Caco-2 (cell line): ENCODE measurements at regions of chr14 and their contacts with region 1.

Region 1: GRCh38 chr14:61537563-61538463 is 157.5 kb upstream of the HIF1A start:
- DNase-seq: peak; percentile 90 to 93
- H3K4me3 ChIP-seq: no peak overlapping the region
- H3K4me3 Mint-ChIP-seq: peak overlapping the region; percentile 63
- H3K27ac Mint-ChIP-seq: peak overlapping the region; percentile 99
- H3K4me1 ChIP-seq: peaks cover 45% of the 10 kb centered on the region
- H3K4me1 Mint-ChIP-seq: peaks cover 42% of the 10 kb centered on the region
- H3K27me3 ChIP-seq: no peaks in the 10 kb centered on the region
- H3K27me3 Mint-ChIP-seq: no peaks in the 10 kb centered on the region
- CTCF ChIP-seq: no peak

Region 2: DNA sequence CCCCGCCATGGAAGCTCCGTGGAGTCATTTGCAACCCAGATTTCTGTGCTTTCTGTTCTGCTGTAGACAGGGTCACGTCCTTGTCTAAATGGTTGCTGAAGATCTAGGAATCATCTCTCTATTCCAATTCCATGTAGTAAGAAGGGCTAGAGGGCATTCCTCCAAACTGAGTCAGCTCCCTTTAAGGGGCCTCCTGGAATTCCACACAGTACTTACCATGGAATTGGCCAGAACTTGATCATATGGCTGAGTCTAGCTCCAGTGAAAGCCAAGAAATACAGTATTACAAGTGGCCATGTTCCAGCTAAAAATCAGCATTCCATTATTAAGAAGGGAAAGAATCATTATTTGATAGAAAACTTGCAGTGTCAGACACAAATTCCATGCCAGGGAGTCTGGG is 44.6 kb before region 1 on chr14:
- CTCF ChIA-PET with region 1: no interaction called
- POLR2A ChIA-PET with region 1: no interaction called
- intact Hi-C with region 1: loop called (anchors 2 kb)
- DNase-seq: peak in 1 of 2 experiments; percentile 12
- H3K4me3 ChIP-seq: no peak overlapping the region
- H3K4me3 Mint-ChIP-seq: no peak overlapping the region
- H3K27ac Mint-ChIP-seq: no peak overlapping the region
- H3K4me1 ChIP-seq: peaks cover 47% of the 10 kb centered on the region
- H3K4me1 Mint-ChIP-seq: peaks cover 6% of the 10 kb centered on the region
- H3K27me3 ChIP-seq: no peaks in the 10 kb centered on the region
- H3K27me3 Mint-ChIP-seq: no peaks in the 10 kb centered on the region
- CTCF ChIP-seq: no peak

Region 3: DNA sequence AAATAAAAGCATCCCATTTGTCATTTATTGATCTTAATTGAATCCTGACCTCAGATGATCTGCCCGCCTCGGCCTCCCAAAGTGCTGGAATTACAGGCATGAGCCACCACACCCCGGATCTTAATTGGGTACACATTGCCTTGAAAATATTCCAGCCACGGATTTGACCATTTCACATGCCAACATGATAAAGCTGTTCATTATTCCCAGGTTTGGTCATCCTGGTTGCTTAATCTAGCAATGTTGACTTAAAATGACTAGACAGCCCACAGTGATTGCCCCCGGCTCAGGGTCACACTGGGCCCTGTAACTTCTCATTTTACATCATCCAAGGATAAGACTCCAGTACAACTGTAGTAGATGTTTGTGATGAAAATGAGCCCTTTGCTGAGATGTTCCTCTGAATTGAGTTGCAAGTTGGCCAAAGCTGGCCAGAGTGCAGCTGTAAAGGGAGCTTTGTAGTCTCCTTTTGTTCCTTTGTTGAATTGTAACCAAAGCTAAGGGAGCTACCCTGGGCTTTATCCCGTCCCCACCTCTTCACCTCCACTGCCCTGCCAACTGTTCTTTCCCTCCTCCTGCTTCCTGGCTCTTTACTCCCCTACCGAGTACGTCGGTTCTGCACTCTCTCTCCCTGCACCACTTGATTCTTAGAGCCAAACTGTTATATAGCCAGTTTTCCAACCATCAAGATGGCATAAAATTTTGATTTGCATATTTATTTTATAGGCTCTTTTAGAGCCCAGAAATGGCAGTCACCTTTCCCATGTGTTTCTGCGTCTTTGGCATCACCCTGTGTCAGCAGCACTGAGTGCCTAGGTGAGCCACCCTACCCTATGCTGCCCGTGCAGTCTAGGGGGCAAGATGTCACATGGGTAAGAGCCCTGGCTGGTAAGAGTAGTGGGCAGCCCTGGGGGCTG is 16.2 kb after region 1 on chr14:
- CTCF ChIA-PET with region 1: interaction called, 18 read pairs
- POLR2A ChIA-PET with region 1: interaction called, 30 read pairs
- intact Hi-C with region 1: loop called (anchors 1 kb)
- DNase-seq: peak; percentile 43 to 51
- H3K4me3 ChIP-seq: no peak overlapping the region
- H3K4me3 Mint-ChIP-seq: peak overlapping the region; percentile 26
- H3K27ac Mint-ChIP-seq: peak overlapping the region; percentile 84
- H3K4me1 ChIP-seq: peaks cover 20% of the 10 kb centered on the region
- H3K4me1 Mint-ChIP-seq: peaks cover 24% of the 10 kb centered on the region
- H3K27me3 ChIP-seq: no peaks in the 10 kb centered on the region
- H3K27me3 Mint-ChIP-seq: no peaks in the 10 kb centered on the region
- CTCF ChIP-seq: no peak

Region 4: GRCh38 chr14:61581955-61582615 is 44.3 kb after region 1 on chr14:
- CTCF ChIA-PET with region 1: interaction called, 10 read pairs
- POLR2A ChIA-PET with region 1: interaction called, 8 read pairs
- intact Hi-C with region 1: loop called (anchors 1 kb)
- DNase-seq: no peak
- H3K4me3 ChIP-seq: no peak overlapping the region
- H3K4me3 Mint-ChIP-seq: peak overlapping the region; percentile 36
- H3K27ac Mint-ChIP-seq: peak overlapping the region; percentile 48
- H3K4me1 ChIP-seq: peaks cover 26% of the 10 kb centered on the region
- H3K4me1 Mint-ChIP-seq: peaks cover 25% of the 10 kb centered on the region
- H3K27me3 ChIP-seq: no peaks in the 10 kb centered on the region
- H3K27me3 Mint-ChIP-seq: no peaks in the 10 kb centered on the region
- CTCF ChIP-seq: no peak

Region 5: GRCh38 chr14:61750708-61751474 is 213.1 kb after region 1 on chr14:
- CTCF ChIA-PET with region 1: no interaction called
- POLR2A ChIA-PET with region 1: no interaction called
- intact Hi-C with region 1: loop called (anchors 5 kb)
- DNase-seq: peak; percentile 82 to 86
- H3K4me3 ChIP-seq: peak overlapping the region; percentile 70
- H3K4me3 Mint-ChIP-seq: peak overlapping the region; percentile 80
- H3K27ac Mint-ChIP-seq: peak overlapping the region; percentile 61
- H3K4me1 ChIP-seq: peaks cover 40% of the 10 kb centered on the region
- H3K4me1 Mint-ChIP-seq: peaks cover 15% of the 10 kb centered on the region
- H3K27me3 ChIP-seq: no peaks in the 10 kb centered on the region
- H3K27me3 Mint-ChIP-seq: no peaks in the 10 kb centered on the region
- CTCF ChIP-seq: no peak